ENCODE measurements at regions of chr7 and their contacts with region 1.

Region 1: GRCh38 chr7:2214636-2215035 is 18.1 kb downstream of the MAD1L1 start:
- DNase-seq: no peak
- ATAC-seq: peak; percentile 24

Region 2: DNA sequence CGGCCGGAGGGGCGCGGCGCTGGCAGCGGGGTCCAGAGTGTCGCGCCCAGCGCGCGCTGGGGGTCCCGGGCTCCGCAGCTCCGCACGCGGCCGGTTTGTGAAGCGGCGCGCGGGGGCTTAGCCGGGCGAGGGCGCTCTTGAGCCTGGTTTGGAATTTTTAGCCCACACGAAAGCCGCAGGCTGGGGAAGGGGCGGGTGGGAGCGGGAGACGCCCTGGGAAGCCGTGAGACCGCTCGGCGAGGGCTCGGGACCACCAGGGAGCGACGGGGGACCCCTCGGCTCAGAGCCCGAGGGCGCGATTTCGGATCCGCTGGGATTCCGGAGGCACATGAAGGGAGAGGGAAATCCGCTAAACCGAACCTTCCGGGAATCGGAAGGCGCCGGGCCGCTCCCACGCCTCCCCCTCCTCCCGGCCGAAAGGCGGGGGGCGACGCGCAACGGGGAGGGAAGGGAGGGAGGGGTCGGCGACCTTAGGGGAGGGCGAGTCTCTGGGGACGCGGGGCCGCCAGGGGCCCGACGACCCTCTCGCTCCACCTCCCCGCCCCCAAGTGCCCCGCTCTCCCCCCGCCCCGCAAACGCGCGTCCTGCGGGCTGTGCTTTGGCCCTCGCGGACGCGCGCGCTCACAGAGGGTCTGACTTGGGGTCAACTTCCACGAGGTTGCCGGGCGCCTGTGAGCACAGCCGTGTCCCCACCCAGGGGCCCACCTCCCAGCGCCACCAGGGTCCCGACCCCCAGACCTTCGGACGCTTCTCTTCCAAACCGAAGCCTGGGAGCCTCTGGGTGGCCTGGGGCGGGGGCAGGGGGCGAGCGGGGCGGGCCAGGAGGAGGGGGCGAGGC is 549.7 kb before region 1 on chr7:
- intact Hi-C with region 1: loop called (anchors 5 kb)
- DNase-seq: peak; percentile 76
- ATAC-seq: peak; percentile 21

Region 3: GRCh38 chr7:1899196-1899595 is 315.4 kb before region 1 on chr7:
- intact Hi-C with region 1: loop called (anchors 10 kb)
- DNase-seq: peak; percentile 70
- ATAC-seq: peak; percentile 50

Region 4: DNA sequence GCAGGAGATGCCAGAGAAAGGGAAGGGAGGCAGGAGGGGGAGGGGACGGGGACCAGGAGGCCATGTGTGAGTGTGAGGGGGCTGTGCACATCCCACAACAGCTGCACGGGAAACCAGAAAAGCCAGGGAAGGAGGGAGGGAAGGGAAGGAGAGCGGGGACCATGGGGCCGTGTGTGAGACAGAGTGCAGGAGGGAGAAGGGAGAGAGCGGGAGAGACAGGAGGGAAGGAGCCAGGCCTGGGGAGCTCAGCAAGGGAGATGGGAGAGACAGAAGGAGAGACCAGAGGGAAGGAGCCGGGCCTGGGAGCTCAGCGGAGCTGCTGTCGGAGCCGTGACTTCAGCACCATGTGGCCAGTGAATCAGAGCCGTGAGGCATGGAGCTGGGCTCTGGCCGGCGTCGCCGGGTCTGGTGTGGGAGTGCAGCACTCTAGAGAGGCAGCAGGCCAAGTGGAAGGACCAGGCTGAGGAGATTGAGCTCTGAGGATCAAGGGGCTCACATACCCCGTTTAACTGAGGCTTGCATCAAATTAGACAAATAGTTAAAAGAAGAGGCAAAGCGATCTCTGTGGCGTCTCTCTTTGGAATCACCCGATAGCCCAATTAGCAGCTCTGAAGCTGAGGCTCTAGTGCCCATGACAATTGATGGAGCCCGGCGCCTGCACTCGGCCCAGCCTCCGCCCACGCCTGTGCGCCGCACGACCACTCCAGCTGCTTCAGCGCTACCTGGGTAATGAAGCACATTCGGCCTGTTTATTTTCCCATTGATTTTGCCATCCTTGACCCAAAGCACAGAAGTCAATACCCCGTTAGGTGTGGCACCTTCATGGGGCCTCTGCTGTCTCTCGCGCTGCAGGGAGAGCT is 132.3 kb before region 1 on chr7:
- intact Hi-C with region 1: no loop called
- DNase-seq: no peak
- ATAC-seq: no peak

Region 5: DNA sequence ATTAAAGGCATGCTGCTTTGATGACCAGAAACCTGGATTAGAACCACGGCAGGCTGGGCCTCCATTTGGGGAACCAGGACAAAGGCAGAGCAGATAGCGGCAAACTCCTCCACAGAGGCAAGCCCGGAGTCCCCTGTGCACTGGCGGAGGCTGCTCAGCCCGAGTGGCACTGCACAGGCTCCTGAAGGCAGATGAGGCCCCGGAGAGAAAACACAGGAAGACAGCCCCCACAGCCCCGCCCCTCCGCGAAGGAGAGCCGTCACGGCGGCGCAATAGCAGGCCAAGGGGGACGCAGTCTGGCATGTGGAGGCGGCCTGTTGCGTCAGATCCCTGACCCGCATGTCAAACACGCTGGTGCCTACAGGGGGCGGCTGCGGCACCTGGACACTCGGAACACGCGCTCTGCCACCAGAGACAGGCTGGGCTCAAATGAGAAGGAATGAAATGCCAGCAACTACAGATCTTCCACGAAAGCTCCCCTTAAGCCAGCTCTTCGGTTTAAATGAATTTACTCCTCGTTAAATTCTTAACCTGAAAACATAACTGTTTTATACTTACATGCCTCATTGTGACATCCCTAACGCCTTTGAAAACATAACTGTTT is 110.4 kb before region 1 on chr7:
- intact Hi-C with region 1: loop called (anchors 5 kb)
- DNase-seq: peak; percentile 93
- ATAC-seq: peak; percentile 90

Region 6: GRCh38 chr7:2157468-2158279 is 57.0 kb before region 1 on chr7:
- intact Hi-C with region 1: no loop called
- DNase-seq: peak; percentile 52
- ATAC-seq: peak; percentile 82

Region 7: GRCh38 chr7:2420216-2420933 is 205.7 kb after region 1 on chr7:
- intact Hi-C with region 1: no loop called
- DNase-seq: no peak
- ATAC-seq: no peak